Activated B cell treated with CpG ODN at 0.5 μM for 24 hours (primary cell): ENCODE measurements at regions of chr11 and their contacts with region 1.

Region 1: DNA sequence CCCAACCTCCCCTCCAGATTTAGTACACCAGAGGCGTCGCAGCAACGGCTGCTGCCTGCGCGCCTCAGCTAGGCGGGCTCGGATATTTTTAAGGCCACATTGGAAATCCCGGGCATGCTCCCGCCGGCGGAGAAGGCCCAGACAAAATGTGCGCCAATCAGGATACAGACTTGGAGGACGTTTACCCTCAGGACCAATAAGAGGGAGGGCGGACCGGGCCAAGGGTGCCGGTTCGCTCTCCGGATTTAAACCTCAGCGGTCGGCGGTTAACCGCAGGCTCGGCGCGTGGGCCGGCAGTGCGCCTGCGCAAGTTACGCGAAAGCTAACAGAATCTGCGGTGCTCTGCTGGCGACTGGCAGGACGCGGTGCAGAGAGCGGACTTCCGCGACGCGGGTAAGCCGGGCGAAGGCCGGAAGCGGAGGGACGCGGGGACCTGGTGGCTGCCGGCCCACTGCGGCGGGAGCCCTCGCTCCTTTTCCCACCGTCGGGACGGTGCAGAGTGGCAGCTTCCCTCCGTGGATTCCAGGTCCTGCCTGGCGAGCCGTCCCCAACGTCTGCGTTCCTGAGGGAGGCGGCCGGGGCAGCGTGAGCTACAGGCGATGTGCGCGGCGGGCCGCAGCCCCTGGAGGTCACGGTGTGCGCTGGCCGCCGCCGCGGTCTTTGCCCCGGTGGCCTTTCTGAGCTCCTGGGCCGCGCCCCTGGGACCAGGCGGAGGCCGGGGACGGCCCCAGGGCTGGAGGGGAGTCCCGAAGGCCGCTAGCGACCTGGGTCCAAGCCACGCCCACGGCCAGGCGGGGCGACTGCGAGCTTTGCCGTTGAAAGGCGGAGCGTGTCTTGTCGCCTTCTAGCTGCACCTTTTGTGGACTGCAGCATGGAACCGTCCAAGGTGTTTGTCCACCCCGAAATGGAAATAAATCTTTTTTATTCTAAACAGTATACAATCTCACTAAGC is at the start of gene HYLS1:
- DNase-seq: peak; percentile 97
- ATAC-seq: peak; percentile 84
- H3K4me3 Mint-ChIP-seq: peak within 1 kb of the TSS; percentile 90
- H3K27ac Mint-ChIP-seq: peak within 1 kb of the TSS; percentile 98
- H3K4me1 Mint-ChIP-seq: peaks cover 18% of the 10 kb centered on the region
- H3K27me3 Mint-ChIP-seq: peaks cover 3% of the 10 kb centered on the region
- CTCF ChIP-seq: no peak
- total RNA-seq, gene HYLS1: 9.0 TPM in 2 replicates

Region 2: DNA sequence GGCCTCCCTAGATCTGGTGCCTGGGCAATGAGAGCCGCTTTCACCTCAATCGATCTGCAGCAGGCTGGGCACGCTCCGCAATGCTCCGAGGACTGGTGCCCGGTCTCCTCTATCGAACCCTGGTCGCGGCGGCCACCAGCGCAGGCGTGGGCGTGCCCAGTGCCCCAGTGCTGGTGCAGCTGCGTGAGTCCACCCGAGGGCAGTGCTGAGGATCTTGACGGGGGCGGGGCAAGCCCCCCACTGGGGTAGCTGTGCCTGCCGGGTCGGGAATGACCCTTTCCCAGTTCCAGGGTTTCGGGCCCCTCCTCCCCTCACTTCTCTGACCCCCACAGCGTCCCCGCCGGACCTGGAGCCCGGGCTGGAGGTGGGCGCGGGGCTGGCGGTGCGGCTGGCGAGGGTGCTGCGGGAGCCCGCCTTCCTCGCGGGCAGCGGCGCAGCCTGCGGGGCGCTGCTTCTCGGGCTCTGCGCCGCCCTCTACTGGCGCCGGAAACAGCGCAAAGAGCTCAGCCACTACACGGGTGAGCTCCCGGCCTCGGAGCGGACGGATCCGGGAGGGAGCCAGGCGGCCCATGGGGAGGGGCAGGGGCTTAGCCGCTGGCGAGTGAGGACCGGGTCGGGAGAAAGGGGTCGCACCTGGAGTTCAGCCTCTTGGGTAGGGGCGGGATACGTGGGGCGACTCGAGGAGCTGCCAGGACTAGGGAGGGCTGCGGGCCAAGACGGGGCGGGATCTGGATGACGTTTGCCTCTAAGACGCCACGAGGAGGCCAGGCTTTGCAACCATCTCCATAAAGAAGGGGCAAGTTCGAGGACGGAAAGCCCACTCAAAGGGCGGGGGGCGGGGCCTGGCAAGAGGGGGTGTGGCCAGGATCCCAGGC is 1011.5 kb before region 1 on chr11:
- CTCF ChIA-PET with region 1: no interaction called
- POLR2A ChIA-PET with region 1: no interaction called
- intact Hi-C with region 1: loop called (anchors 2 kb)
- DNase-seq: peak; percentile 67
- ATAC-seq: peak; percentile 96
- H3K4me3 Mint-ChIP-seq: peak overlapping the region; percentile 85
- H3K27ac Mint-ChIP-seq: no peak overlapping the region
- H3K4me1 Mint-ChIP-seq: peaks cover 18% of the 10 kb centered on the region
- H3K27me3 Mint-ChIP-seq: peaks cover 69% of the 10 kb centered on the region
- CTCF ChIP-seq: peak; percentile 45

Region 3: GRCh38 chr11:125111343-125112207 is 776.1 kb before region 1 on chr11 and contains the start of gene TMEM218:
- CTCF ChIA-PET with region 1: no interaction called
- POLR2A ChIA-PET with region 1: interaction called, 10 read pairs
- intact Hi-C with region 1: loop called (anchors 2 kb)
- DNase-seq: peak; percentile 82
- ATAC-seq: peak; percentile 96
- H3K4me3 Mint-ChIP-seq: peak within 1 kb of the TSS; percentile 98
- H3K27ac Mint-ChIP-seq: peak within 1 kb of the TSS; percentile 97
- H3K4me1 Mint-ChIP-seq: peaks cover 23% of the 10 kb centered on the region
- H3K27me3 Mint-ChIP-seq: peaks cover 4% of the 10 kb centered on the region
- CTCF ChIP-seq: no peak
- total RNA-seq, gene TMEM218: 18.8 and 20.1 TPM in 2 replicates

Region 4: DNA sequence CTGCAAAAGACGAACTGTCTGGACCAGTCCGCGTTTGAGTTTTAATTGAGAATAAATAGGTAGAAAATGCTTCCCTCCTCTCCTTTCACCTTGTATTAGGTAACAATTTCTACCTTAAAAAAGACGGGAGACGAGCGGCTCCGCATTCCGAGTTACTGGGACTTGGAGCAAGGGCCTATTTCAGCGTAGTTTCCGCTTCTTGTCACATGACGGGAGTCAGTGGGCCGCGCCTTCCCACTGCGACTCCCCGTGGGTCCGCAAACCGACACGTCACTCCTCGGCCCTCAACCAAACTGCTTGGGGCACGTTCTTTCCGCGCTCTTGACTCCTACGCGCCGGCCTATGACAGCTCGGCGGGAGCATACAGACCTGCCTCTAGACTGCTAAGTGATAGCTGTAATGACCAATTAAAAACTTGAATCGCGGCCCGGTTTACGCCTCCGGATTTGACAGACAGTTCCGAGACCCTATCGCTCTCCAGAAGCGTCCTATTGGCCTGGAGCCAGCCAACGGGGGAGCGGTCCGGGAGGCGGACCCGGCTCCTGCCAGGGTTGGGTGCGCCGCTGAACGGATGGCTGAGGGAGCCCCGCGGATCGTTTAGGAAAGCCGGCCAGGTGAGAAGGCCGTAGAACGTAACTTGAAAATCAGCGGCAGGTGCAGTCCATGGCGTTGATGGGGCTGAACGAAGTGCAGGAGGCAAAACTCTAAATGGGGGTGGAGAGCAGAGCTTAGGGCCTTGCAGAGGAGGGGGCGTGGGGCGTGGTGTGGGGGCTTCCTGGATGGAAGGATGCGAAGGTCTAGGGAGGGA is 295.1 kb before region 1 on chr11 and contains the start of gene STT3A:
- CTCF ChIA-PET with region 1: no interaction called
- POLR2A ChIA-PET with region 1: interaction called, 33 read pairs
- intact Hi-C with region 1: loop called (anchors 1 kb)
- DNase-seq: peak; percentile 90
- ATAC-seq: peak; percentile 92
- H3K4me3 Mint-ChIP-seq: peak within 1 kb of the TSS; percentile 95
- H3K27ac Mint-ChIP-seq: peak within 1 kb of the TSS; percentile 99
- H3K4me1 Mint-ChIP-seq: peaks cover 58% of the 10 kb centered on the region
- H3K27me3 Mint-ChIP-seq: no peaks in the 10 kb centered on the region
- CTCF ChIP-seq: no peak
- total RNA-seq, gene STT3A: 79.4 and 86.5 TPM in 2 replicates

Region 5: DNA sequence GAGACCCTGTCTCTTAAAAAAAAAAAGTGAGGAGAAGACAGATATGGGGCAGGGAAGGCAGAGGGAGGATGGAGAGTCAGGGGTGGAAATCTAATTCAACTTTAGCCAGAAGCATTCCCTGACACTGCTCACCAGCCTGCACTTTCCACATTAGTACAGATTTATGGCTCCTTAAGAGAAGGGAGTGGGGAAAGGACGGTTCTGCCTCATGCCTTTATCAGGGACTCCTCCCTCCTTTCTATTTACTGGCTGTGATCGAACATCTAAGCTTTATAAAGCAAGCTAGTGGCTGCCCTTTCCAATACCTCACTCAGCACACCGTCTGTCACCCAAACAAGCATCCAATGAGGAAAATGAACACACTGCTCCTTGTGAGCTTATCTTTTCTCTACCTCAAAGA is 54.6 kb before region 1 on chr11 and contains the start of gene PATE4:
- CTCF ChIA-PET with region 1: no interaction called
- POLR2A ChIA-PET with region 1: no interaction called
- intact Hi-C with region 1: no loop called
- DNase-seq: no peak
- ATAC-seq: no peak
- H3K4me3 Mint-ChIP-seq: no peak within 1 kb of the TSS
- H3K27ac Mint-ChIP-seq: no peak within 1 kb of the TSS
- H3K4me1 Mint-ChIP-seq: no peaks in the 10 kb centered on the region
- H3K27me3 Mint-ChIP-seq: peaks cover 3% of the 10 kb centered on the region
- CTCF ChIP-seq: no peak
- total RNA-seq, gene PATE4: not detected in 2 replicates

Region 6: GRCh38 chr11:125941619-125942611 is 54.3 kb after region 1 on chr11:
- CTCF ChIA-PET with region 1: no interaction called
- POLR2A ChIA-PET with region 1: no interaction called
- intact Hi-C with region 1: no loop called
- DNase-seq: no peak
- ATAC-seq: no peak
- H3K4me3 Mint-ChIP-seq: no peak overlapping the region
- H3K27ac Mint-ChIP-seq: no peak overlapping the region
- H3K4me1 Mint-ChIP-seq: no peaks in the 10 kb centered on the region
- H3K27me3 Mint-ChIP-seq: no peaks in the 10 kb centered on the region
- CTCF ChIP-seq: no peak

Region 7: GRCh38 chr11:126062679-126063506 is 175.2 kb after region 1 on chr11 and contains the start of gene CDON:
- CTCF ChIA-PET with region 1: no interaction called
- POLR2A ChIA-PET with region 1: no interaction called
- intact Hi-C with region 1: loop called (anchors 2 kb)
- DNase-seq: peak; percentile 72
- ATAC-seq: peak; percentile 90
- H3K4me3 Mint-ChIP-seq: peak within 1 kb of the TSS; percentile 81
- H3K27ac Mint-ChIP-seq: no peak within 1 kb of the TSS
- H3K4me1 Mint-ChIP-seq: peaks cover 6% of the 10 kb centered on the region
- H3K27me3 Mint-ChIP-seq: peaks cover 38% of the 10 kb centered on the region
- CTCF ChIP-seq: no peak
- total RNA-seq, gene CDON: 0.24 and 0.27 TPM in 2 replicates